T-cell (primary cell): ENCODE measurements at regions of chr1 and their contacts with region 1.

Region 1: GRCh38 chr1:81998165-81998564 is 197.4 kb downstream of the ADGRL2 start:
- DNase-seq: no peak
- ATAC-seq: no peak
- H3K4me3 ChIP-seq: no peak overlapping the region
- H3K4me3 Mint-ChIP-seq: no peak overlapping the region
- H3K27ac ChIP-seq: no peak overlapping the region
- H3K27ac Mint-ChIP-seq: no peak overlapping the region
- H3K4me1 ChIP-seq: no peaks in the 10 kb centered on the region
- H3K4me1 Mint-ChIP-seq: no peaks in the 10 kb centered on the region
- H3K27me3 ChIP-seq: no peaks in the 10 kb centered on the region
- H3K27me3 Mint-ChIP-seq: no peaks in the 10 kb centered on the region

Region 2: GRCh38 chr1:82018319-82018718 is 20.2 kb after region 1 on chr1:
- CTCF ChIA-PET with region 1: no interaction called
- POLR2A ChIA-PET with region 1: no interaction called
- DNase-seq: no peak
- ATAC-seq: no peak
- H3K4me3 ChIP-seq: no peak overlapping the region
- H3K4me3 Mint-ChIP-seq: no peak overlapping the region
- H3K27ac ChIP-seq: no peak overlapping the region
- H3K27ac Mint-ChIP-seq: no peak overlapping the region
- H3K4me1 ChIP-seq: no peaks in the 10 kb centered on the region
- H3K4me1 Mint-ChIP-seq: no peaks in the 10 kb centered on the region
- H3K27me3 ChIP-seq: no peaks in the 10 kb centered on the region
- H3K27me3 Mint-ChIP-seq: no peaks in the 10 kb centered on the region

Region 3: GRCh38 chr1:82197606-82198005 is 199.4 kb after region 1 on chr1:
- CTCF ChIA-PET with region 1: no interaction called
- POLR2A ChIA-PET with region 1: no interaction called
- DNase-seq: no peak
- ATAC-seq: no peak
- H3K4me3 ChIP-seq: no peak overlapping the region
- H3K4me3 Mint-ChIP-seq: no peak overlapping the region
- H3K27ac ChIP-seq: no peak overlapping the region
- H3K27ac Mint-ChIP-seq: no peak overlapping the region
- H3K4me1 ChIP-seq: no peaks in the 10 kb centered on the region
- H3K4me1 Mint-ChIP-seq: no peaks in the 10 kb centered on the region
- H3K27me3 ChIP-seq: no peaks in the 10 kb centered on the region
- H3K27me3 Mint-ChIP-seq: no peaks in the 10 kb centered on the region

Region 4: GRCh38 chr1:82775402-82776000 is 777.3 kb after region 1 on chr1:
- CTCF ChIA-PET with region 1: interaction called in 1 of 2 experiments, 10 read pairs
- POLR2A ChIA-PET with region 1: no interaction called
- DNase-seq: peak in 4 of 35 experiments; percentile 7 to 28 (median 16)
- ATAC-seq: no peak
- H3K4me3 ChIP-seq: no peak overlapping the region
- H3K4me3 Mint-ChIP-seq: no peak overlapping the region
- H3K27ac ChIP-seq: no peak overlapping the region
- H3K27ac Mint-ChIP-seq: no peak overlapping the region
- H3K4me1 ChIP-seq: no peaks in the 10 kb centered on the region
- H3K4me1 Mint-ChIP-seq: peaks cover 0 to 5% (median 0%) of the 10 kb centered on the region in 3 donors
- H3K27me3 ChIP-seq: no peaks in the 10 kb centered on the region
- H3K27me3 Mint-ChIP-seq: peaks cover 0 to 5% of the 10 kb centered on the region in 2 donors